ENCODE measurements at regions of chr6 and their contacts with region 1.

Region 1: GRCh38 chr6:27902335-27903314 is 9.6 kb downstream of the OR2B2 start:
- DNase-seq: peak; percentile 81
- H3K4me3 ChIP-seq: peak overlapping the region; percentile 73
- H3K27ac ChIP-seq: peak overlapping the region; percentile 78
- H3K4me1 ChIP-seq: peaks cover 12% of the 10 kb centered on the region
- CTCF ChIP-seq: no peak

Region 2: DNA sequence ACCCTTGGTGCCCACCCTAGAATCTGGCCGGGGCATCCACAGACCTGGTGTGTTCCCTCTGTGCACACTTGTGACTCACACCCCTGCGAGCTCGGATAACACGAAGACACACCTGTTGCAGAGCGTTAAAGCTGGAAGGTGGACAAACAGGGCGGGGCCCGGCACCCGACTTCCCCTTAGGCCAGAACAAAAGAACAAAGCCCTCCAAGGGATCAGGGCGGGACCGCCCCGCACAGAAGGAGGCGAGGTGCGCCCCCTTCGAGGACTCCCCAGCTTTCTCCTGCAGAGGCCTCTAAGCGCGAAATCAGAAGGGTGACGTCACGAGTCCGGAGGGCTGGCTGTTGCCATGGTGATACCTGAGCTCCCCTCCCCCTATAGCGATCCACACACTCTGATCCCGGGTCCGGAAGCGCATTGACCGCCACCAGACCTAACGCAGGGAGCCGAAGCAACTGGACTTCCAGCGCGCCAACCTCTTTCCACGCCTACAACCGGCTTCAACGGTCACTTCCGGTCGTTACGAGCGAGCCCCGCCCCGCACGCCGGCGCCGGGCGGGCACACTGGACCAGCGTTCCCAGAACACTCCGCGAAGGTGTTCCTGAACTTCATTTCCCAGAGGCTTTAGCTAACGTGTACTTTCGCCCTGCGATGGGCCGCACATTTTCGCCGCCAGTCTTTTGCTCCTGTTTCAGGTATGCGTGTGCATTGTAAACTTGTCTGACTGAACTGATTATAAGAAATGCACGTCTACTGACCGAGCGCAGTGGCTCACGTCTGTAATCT is 429.8 kb before region 1 on chr6 and contains the start of gene ZNF184:
- CTCF ChIA-PET with region 1: no interaction called
- POLR2A ChIA-PET with region 1: no interaction called
- intact Hi-C with region 1: loop called (anchors 5 kb)
- DNase-seq: peak; percentile 97
- H3K4me3 ChIP-seq: peak within 1 kb of the TSS; percentile 88
- H3K27ac ChIP-seq: peak within 1 kb of the TSS; percentile 88
- H3K4me1 ChIP-seq: peaks cover 32% of the 10 kb centered on the region
- CTCF ChIP-seq: peak; percentile 44
- total RNA-seq, gene ZNF184: 18.6 and 20.6 TPM in 2 replicates

Region 3: GRCh38 chr6:27630727-27631608 is 271.7 kb before region 1 on chr6:
- CTCF ChIA-PET with region 1: no interaction called
- POLR2A ChIA-PET with region 1: no interaction called
- intact Hi-C with region 1: no loop called
- DNase-seq: no peak
- H3K4me3 ChIP-seq: no peak overlapping the region
- H3K27ac ChIP-seq: no peak overlapping the region
- H3K4me1 ChIP-seq: no peaks in the 10 kb centered on the region
- CTCF ChIP-seq: no peak

Region 4: GRCh38 chr6:27650620-27651370 is 251.8 kb before region 1 on chr6:
- CTCF ChIA-PET with region 1: no interaction called
- POLR2A ChIA-PET with region 1: no interaction called
- intact Hi-C with region 1: no loop called
- DNase-seq: no peak
- H3K4me3 ChIP-seq: no peak overlapping the region
- H3K27ac ChIP-seq: no peak overlapping the region
- H3K4me1 ChIP-seq: no peaks in the 10 kb centered on the region
- CTCF ChIP-seq: 0 out of 2 replicates have a peak, but pooled peaks have one; percentile 26

Region 5: DNA sequence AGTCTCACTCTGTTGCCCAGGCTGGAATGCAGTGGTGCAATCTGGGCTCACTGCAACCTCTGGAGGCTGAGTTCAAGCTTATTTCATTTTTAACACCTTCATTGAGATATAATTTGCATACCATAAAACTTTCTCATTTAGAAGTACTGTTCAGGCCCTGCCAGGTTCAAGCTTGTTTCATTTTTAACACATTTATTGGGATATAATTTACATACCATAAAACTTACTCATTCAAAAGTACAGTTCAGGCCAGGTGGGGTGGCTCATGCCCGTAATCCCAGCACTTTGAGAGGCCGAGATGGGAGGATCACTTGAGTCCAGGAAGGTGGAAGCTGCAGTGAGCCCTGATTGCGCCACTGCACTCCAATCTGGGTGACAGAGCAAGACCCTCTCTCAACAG is 59.9 kb after region 1 on chr6:
- CTCF ChIA-PET with region 1: no interaction called
- POLR2A ChIA-PET with region 1: interaction called, 3 read pairs
- intact Hi-C with region 1: loop called (anchors 5 kb)
- DNase-seq: no peak
- H3K4me3 ChIP-seq: no peak overlapping the region
- H3K27ac ChIP-seq: no peak overlapping the region
- H3K4me1 ChIP-seq: peaks cover 44% of the 10 kb centered on the region
- CTCF ChIP-seq: no peak

Region 6: DNA sequence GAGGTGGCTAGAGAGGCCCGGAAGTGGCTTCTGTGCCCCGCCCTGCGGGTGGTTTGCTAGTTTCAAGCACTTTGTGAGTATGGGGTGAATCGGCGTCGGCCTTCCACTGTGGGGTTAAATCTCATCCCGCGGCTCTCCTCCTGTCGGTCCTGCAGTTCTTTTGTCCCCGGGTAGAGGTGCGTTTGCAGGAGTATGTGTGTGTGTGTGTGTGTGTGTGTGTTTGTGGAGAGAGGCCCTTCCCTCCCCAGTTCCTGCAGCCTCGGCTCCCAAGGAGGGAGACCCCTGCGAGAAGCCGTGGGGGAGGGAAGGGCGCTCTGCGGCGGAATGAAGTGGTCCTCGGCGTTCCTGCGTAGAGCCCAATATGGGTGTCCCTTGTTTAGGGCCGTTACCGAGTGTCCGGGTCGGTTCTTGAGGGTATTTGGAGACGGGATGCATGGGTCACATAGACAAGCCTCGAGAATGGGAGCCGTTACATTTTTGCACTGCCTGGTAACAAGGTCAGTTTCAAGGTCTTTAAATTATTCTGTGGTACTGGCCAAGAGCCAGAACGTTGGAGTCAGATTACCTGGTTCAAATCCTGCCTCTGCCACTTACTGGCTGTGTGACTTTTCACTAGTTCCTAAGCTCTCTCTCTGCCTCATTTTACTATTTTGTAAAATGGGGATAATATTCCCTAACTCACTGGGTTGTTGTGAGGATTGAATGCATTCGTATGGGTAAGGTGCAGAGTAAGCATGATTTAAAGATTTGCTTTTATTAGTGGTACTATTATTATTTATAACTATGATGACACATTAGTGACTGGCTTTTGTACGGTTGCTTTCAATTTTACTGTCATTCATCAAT is 447.5 kb after region 1 on chr6 and contains the start of gene ZKSCAN3:
- CTCF ChIA-PET with region 1: no interaction called
- POLR2A ChIA-PET with region 1: no interaction called
- intact Hi-C with region 1: loop called (anchors 5 kb)
- DNase-seq: peak; percentile 85
- H3K4me3 ChIP-seq: peak within 1 kb of the TSS; percentile 79
- H3K27ac ChIP-seq: peak within 1 kb of the TSS; percentile 31
- H3K4me1 ChIP-seq: peaks cover 8% of the 10 kb centered on the region
- CTCF ChIP-seq: no peak
- total RNA-seq, gene ZKSCAN3: 2.5 and 3.2 TPM in 2 replicates

Region 7: DNA sequence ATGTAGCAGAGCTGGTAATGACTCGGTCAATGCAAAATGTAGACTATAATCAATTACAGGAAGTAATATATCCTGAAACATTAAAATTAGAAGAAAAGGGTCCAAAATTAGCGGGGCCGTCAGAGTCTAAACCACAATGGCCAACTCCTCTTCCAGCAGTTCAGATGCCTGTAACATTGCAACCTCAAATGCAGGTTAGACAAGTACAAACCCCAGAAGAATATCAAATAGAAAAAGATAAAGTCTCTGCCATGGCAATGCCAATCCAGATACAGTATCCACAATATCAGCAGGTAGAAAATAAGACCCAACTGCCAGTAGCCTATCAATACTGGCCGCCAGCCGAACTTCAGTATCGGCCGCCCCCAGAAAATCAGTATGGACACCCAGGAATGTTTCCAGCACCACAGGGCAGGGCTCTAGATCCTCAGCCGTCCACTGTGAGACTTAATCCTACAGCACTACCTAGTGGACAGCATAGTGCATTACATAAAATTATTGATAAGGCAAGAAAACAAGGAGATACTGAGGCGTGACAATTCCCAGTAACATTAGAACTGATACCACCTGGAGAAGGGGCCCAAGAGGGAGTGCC is 781.4 kb after region 1 on chr6:
- CTCF ChIA-PET with region 1: no interaction called
- POLR2A ChIA-PET with region 1: no interaction called
- intact Hi-C with region 1: loop called (anchors 10 kb)
- DNase-seq: peak; percentile 65
- H3K4me3 ChIP-seq: no peak overlapping the region
- H3K27ac ChIP-seq: no peak overlapping the region
- H3K4me1 ChIP-seq: peaks cover 3% of the 10 kb centered on the region
- CTCF ChIP-seq: peak; percentile 85

Region 8: DNA sequence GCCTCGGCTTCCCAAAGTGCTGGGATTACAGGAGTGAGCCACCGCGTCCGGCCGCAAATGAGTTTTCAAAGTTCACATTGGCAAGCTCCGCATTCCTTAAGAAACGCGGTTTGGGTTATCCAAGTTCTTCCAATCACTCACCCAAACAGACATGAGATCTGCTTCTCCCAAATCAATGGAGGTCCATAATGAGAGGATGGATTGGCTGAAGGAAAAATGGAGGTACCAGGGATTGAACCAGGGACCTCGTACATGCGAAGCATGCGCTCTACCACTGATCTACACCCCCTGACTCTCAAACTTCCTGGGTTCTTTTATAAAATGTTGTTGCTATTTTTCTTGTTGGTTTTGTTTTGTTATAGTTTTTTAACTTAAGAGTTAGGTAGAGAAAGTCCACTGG is 793.1 kb after region 1 on chr6:
- CTCF ChIA-PET with region 1: no interaction called
- POLR2A ChIA-PET with region 1: no interaction called
- intact Hi-C with region 1: no loop called
- DNase-seq: no peak
- H3K4me3 ChIP-seq: no peak overlapping the region
- H3K27ac ChIP-seq: no peak overlapping the region
- H3K4me1 ChIP-seq: no peaks in the 10 kb centered on the region
- CTCF ChIP-seq: no peak

Measured in OCI-LY7 (cell line).